HEK293 (cell line): ENCODE measurements at regions of chr16 and their contacts with region 1.

Region 1: GRCh38 chr16:4253394-4254150 is 11.7 kb upstream of the SRL start:
- H3K4me3 ChIP-seq: peak overlapping the region; percentile 52
- H3K27ac ChIP-seq: peak overlapping the region; percentile 73
- H3K4me1 ChIP-seq: no peaks in the 10 kb centered on the region
- CTCF ChIP-seq: peak; percentile 45; the same call in 1 of the 2 replicates

Region 2: DNA sequence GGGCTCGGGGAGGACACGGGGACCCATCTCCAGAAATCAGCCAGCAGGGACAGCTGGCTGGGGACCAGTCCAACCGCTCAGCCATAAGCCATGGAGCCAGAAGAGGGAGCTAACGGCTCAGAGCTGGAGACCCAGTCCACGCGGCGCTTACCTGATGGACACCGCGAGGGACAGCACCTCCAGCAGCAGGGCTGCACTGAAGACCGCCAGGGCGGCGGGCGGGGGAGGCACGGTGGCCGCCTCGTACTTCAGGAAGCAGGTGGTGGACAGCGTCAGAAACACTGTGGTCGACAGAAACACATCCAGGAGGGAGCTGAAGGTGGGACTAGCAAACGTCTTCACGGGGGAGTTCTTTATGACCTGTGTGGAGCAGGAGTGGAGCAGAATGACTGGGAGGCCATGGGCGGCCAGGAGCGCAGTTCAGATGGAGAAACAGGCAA is 270.5 kb before region 1 on chr16:
- CTCF ChIA-PET with region 1: interaction called, 28 read pairs
- POLR2A ChIA-PET with region 1: interaction called, 5 read pairs
- H3K4me3 ChIP-seq: no peak overlapping the region
- H3K27ac ChIP-seq: no peak overlapping the region
- H3K4me1 ChIP-seq: peaks cover 8% of the 10 kb centered on the region
- CTCF ChIP-seq: peak; percentile 86

Region 3: GRCh38 chr16:4193920-4194319 is 59.7 kb before region 1 on chr16:
- CTCF ChIA-PET with region 1: interaction called, 73 read pairs
- POLR2A ChIA-PET with region 1: interaction called, 6 read pairs
- H3K4me3 ChIP-seq: no peak overlapping the region
- H3K27ac ChIP-seq: no peak overlapping the region
- H3K4me1 ChIP-seq: no peaks in the 10 kb centered on the region
- CTCF ChIP-seq: no peak

Region 4: DNA sequence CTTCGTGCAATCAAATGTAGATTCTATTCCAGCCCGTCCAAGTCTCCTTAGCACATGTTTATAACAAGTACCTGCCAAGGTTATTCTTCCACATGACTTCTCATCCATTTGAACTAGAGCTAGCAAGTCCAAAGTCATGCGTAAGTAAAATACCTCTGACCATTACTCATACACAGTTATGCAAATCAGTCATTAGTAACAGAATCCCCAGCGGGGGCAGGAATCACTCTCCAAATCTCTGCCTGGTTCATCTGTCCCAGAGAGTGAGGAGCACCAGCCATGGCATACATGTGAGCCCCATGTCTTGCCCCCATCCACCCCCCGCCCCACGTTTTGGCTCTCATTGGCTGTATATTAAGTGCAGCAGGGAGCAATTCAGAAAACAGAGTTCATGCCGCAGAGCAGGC is 39.4 kb before region 1 on chr16:
- CTCF ChIA-PET with region 1: interaction called, 14 read pairs
- POLR2A ChIA-PET with region 1: interaction called, 9 read pairs
- H3K4me3 ChIP-seq: no peak overlapping the region
- H3K27ac ChIP-seq: no peak overlapping the region
- H3K4me1 ChIP-seq: peaks cover 4% of the 10 kb centered on the region; the same call in 1 of the 2 replicates
- CTCF ChIP-seq: no peak

Region 5: GRCh38 chr16:4239020-4239419 is 14.6 kb before region 1 on chr16:
- CTCF ChIA-PET with region 1: interaction called, 23 read pairs
- POLR2A ChIA-PET with region 1: no interaction called
- H3K4me3 ChIP-seq: no peak overlapping the region
- H3K27ac ChIP-seq: no peak overlapping the region
- H3K4me1 ChIP-seq: no peaks in the 10 kb centered on the region
- CTCF ChIP-seq: no peak

Region 6: GRCh38 chr16:4315186-4316109 is 61.9 kb after region 1 on chr16 and contains the start of gene GLIS2:
- CTCF ChIA-PET with region 1: interaction called, 6 read pairs
- POLR2A ChIA-PET with region 1: interaction called, 11 read pairs
- H3K4me3 ChIP-seq: peak within 1 kb of the TSS; percentile 52
- H3K27ac ChIP-seq: peak within 1 kb of the TSS; percentile 66; the same call in 1 of the 2 replicates
- H3K4me1 ChIP-seq: peaks cover 4% of the 10 kb centered on the region; the same call in 1 of the 2 replicates
- CTCF ChIP-seq: no peak